ENCODE measurements at regions of chr20 and their contacts with region 1.

Region 1: GRCh38 chr20:34111702-34112599 is at the start of gene EIF2S2:
- DNase-seq: peak; percentile 96 to 98
- H3K4me3 ChIP-seq: peak within 1 kb of the TSS; percentile 78
- H3K27ac ChIP-seq: peak within 1 kb of the TSS; percentile 92
- H3K4me1 ChIP-seq: peaks cover 27% of the 10 kb centered on the region
- H3K27me3 ChIP-seq: no peaks in the 10 kb centered on the region
- CTCF ChIP-seq: no peak
- total RNA-seq, gene EIF2S2: 129 and 162 TPM in 2 replicates

Region 2: GRCh38 chr20:33521461-33521860 is 590.5 kb before region 1 on chr20:
- CTCF ChIA-PET with region 1: interaction called, 34 read pairs
- POLR2A ChIA-PET with region 1: no interaction called
- intact Hi-C with region 1: no loop called
- DNase-seq: no peak
- H3K4me3 ChIP-seq: no peak overlapping the region
- H3K27ac ChIP-seq: no peak overlapping the region
- H3K4me1 ChIP-seq: peaks cover 27% of the 10 kb centered on the region
- H3K27me3 ChIP-seq: no peaks in the 10 kb centered on the region
- CTCF ChIP-seq: no peak

Region 3: GRCh38 chr20:33630507-33630906 is 481.4 kb before region 1 on chr20:
- CTCF ChIA-PET with region 1: no interaction called
- POLR2A ChIA-PET with region 1: interaction called, 15 read pairs
- intact Hi-C with region 1: no loop called
- DNase-seq: no peak
- H3K4me3 ChIP-seq: no peak overlapping the region
- H3K27ac ChIP-seq: no peak overlapping the region
- H3K4me1 ChIP-seq: no peaks in the 10 kb centered on the region
- H3K27me3 ChIP-seq: no peaks in the 10 kb centered on the region
- CTCF ChIP-seq: no peak